Activated B cell treated with CpG ODN at 0.5 μM for 24 hours (primary cell): ENCODE measurements at regions of chr3 and their contacts with region 1.

Region 1: DNA sequence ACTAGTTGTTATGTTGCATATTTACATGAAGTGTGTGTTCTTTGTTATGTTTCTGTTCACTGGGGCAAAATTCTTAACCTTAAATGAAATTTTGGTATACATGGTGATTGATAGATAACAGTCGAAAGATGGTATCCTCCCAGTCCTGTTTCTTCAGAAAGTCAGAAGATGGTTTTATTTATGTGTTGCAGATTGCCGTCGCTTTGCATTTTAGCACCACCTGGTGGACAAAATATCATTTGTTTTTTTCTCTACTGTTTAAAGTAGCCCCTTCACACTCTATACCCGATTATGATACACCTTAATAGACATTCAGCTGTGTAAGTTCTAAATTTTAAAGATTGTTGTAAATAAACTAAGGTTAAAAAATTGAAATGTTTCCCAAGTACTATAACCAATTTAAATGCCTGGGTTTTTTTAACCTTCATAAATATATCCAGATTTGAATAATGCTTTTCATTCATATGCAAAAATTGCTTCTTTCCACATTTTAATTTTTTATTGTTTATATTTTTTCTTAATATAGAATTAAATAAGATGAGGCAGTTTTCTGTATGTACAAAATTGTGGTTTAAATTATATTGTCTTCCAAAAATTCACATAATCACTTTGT is 152.2 kb downstream of the ALCAM start:
- DNase-seq: no peak
- ATAC-seq: peak; percentile 65
- H3K4me3 Mint-ChIP-seq: no peak overlapping the region
- H3K27ac Mint-ChIP-seq: no peak overlapping the region
- H3K4me1 Mint-ChIP-seq: peaks cover 7% of the 10 kb centered on the region
- H3K27me3 Mint-ChIP-seq: no peaks in the 10 kb centered on the region
- CTCF ChIP-seq: no peak

Region 2: GRCh38 chr3:103794656-103795055 is 1724.3 kb before region 1 on chr3:
- CTCF ChIA-PET with region 1: no interaction called
- POLR2A ChIA-PET with region 1: no interaction called
- intact Hi-C with region 1: loop called (anchors 10 kb)
- DNase-seq: no peak
- ATAC-seq: no peak
- H3K4me3 Mint-ChIP-seq: no peak overlapping the region
- H3K27ac Mint-ChIP-seq: no peak overlapping the region
- H3K4me1 Mint-ChIP-seq: no peaks in the 10 kb centered on the region
- H3K27me3 Mint-ChIP-seq: no peaks in the 10 kb centered on the region
- CTCF ChIP-seq: no peak

Region 3: GRCh38 chr3:104102386-104102785 is 1416.5 kb before region 1 on chr3:
- CTCF ChIA-PET with region 1: interaction called, 3 read pairs
- POLR2A ChIA-PET with region 1: no interaction called
- intact Hi-C with region 1: loop called (anchors 1 kb)
- DNase-seq: no peak
- ATAC-seq: peak; percentile 76
- H3K4me3 Mint-ChIP-seq: no peak overlapping the region
- H3K27ac Mint-ChIP-seq: no peak overlapping the region
- H3K4me1 Mint-ChIP-seq: peaks cover 3% of the 10 kb centered on the region
- H3K27me3 Mint-ChIP-seq: peaks cover 2% of the 10 kb centered on the region
- CTCF ChIP-seq: no peak

Region 4: GRCh38 chr3:104564045-104564643 is 954.8 kb before region 1 on chr3:
- CTCF ChIA-PET with region 1: no interaction called
- POLR2A ChIA-PET with region 1: no interaction called
- intact Hi-C with region 1: loop called (anchors 1 kb)
- DNase-seq: no peak
- ATAC-seq: no peak
- H3K4me3 Mint-ChIP-seq: no peak overlapping the region
- H3K27ac Mint-ChIP-seq: no peak overlapping the region
- H3K4me1 Mint-ChIP-seq: peaks cover 8% of the 10 kb centered on the region
- H3K27me3 Mint-ChIP-seq: no peaks in the 10 kb centered on the region
- CTCF ChIP-seq: peak; percentile 64

Region 5: GRCh38 chr3:104750581-104750980 is 768.3 kb before region 1 on chr3:
- CTCF ChIA-PET with region 1: no interaction called
- POLR2A ChIA-PET with region 1: no interaction called
- intact Hi-C with region 1: loop called (anchors 10 kb)
- DNase-seq: no peak
- ATAC-seq: no peak
- H3K4me3 Mint-ChIP-seq: no peak overlapping the region
- H3K27ac Mint-ChIP-seq: no peak overlapping the region
- H3K4me1 Mint-ChIP-seq: no peaks in the 10 kb centered on the region
- H3K27me3 Mint-ChIP-seq: peaks cover 4% of the 10 kb centered on the region
- CTCF ChIP-seq: no peak

Region 6: DNA sequence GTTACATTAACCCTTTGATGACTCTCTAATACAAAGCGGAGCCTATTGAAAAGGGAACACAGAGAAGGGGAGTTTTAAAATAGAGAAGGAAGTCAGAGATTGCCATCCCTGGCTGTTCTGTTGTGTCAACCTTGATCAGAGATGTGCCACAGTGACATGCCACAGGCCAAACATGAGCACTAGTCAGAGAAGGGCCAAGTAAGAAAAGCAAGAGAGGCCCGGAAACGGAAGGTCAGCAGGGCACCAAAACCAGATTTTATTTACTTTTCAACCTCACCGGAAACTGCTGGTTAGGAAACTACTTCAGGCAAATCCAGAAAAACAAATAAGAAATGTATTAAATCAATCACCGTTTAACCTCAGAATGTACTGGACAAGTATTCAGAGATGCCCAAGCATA is 19.6 kb after region 1 on chr3:
- CTCF ChIA-PET with region 1: no interaction called
- POLR2A ChIA-PET with region 1: no interaction called
- intact Hi-C with region 1: no loop called
- DNase-seq: no peak
- ATAC-seq: no peak
- H3K4me3 Mint-ChIP-seq: no peak overlapping the region
- H3K27ac Mint-ChIP-seq: no peak overlapping the region
- H3K4me1 Mint-ChIP-seq: no peaks in the 10 kb centered on the region
- H3K27me3 Mint-ChIP-seq: no peaks in the 10 kb centered on the region
- CTCF ChIP-seq: no peak

Region 7: DNA sequence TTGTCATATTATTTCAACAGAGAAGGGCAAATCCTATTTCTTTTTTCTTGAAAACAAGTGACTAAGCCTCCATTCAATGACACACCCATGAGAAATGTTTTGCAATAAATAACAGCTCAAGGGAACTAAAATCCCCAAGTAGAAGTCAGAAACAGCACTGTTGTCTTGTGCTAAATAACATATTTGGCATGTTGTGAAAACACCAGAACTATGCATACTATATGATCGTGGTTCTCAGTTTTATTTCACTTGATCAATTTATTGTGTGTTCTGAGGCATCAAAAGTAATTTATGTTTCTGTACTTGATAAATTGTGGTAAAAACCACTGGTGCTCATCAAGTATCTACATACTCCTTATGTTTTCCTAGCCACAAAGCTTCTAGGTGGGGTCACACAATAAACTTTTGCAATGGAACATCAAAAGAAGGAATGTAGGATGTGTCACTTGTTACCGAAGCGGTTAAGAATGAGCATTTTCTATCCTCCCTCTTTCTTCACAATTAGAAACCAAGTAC is 1041.6 kb after region 1 on chr3:
- CTCF ChIA-PET with region 1: no interaction called
- POLR2A ChIA-PET with region 1: no interaction called
- intact Hi-C with region 1: no loop called
- DNase-seq: no peak
- ATAC-seq: no peak
- H3K4me3 Mint-ChIP-seq: no peak overlapping the region
- H3K27ac Mint-ChIP-seq: no peak overlapping the region
- H3K4me1 Mint-ChIP-seq: no peaks in the 10 kb centered on the region
- H3K27me3 Mint-ChIP-seq: no peaks in the 10 kb centered on the region
- CTCF ChIP-seq: no peak

Region 8: GRCh38 chr3:106609666-106610301 is 1090.9 kb after region 1 on chr3:
- CTCF ChIA-PET with region 1: interaction called, 4 read pairs
- POLR2A ChIA-PET with region 1: no interaction called
- intact Hi-C with region 1: loop called (anchors 1 kb)
- DNase-seq: no peak
- ATAC-seq: peak; percentile 64
- H3K4me3 Mint-ChIP-seq: no peak overlapping the region
- H3K27ac Mint-ChIP-seq: no peak overlapping the region
- H3K4me1 Mint-ChIP-seq: no peaks in the 10 kb centered on the region
- H3K27me3 Mint-ChIP-seq: no peaks in the 10 kb centered on the region
- CTCF ChIP-seq: peak; percentile 87